Endothelial cell of umbilical vein (primary cell): ENCODE measurements at regions of chr22 and their contacts with region 1.

Region 1: DNA sequence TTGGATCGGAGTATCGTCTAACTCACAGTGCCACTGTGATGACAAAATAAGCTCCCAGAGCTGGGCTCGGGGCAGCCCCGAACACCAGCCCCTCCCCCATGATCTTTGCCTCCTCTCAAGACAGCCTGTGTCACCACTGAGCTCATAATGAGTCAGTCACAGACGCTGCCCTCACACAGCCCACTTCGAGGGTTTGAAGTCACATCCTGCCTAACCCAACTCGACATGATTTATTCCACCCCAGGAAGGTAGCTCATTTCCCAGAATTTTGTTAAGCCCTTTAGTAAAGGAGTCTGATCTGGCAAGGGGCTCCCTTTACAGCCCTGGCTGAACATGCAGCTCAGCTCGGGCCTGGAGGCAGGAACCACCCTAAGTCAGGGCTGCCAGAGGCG is 22.8 kb downstream of the MYH9 start:
- DNase-seq: peak; percentile 94
- H3K4me3 ChIP-seq: no peak overlapping the region
- H3K27ac ChIP-seq: peak overlapping the region; percentile 88
- H3K4me1 ChIP-seq: peaks cover 92% of the 10 kb centered on the region
- H3K27me3 ChIP-seq: no peaks in the 10 kb centered on the region
- CTCF ChIP-seq: no peak
- POLR2A ChIP-seq: peak; percentile 70

Region 2: GRCh38 chr22:36350751-36351594 is 14.0 kb before region 1 on chr22:
- CTCF ChIA-PET with region 1: interaction called, 12 read pairs
- POLR2A ChIA-PET with region 1: interaction called, 5 read pairs
- dilution Hi-C with region 1: no loop called
- intact Hi-C with region 1: loop called (anchors 1 kb)
- DNase-seq: peak; percentile 56
- H3K4me3 ChIP-seq: no peak overlapping the region
- H3K27ac ChIP-seq: peak overlapping the region; percentile 60
- H3K4me1 ChIP-seq: peaks cover 86% of the 10 kb centered on the region
- H3K27me3 ChIP-seq: no peaks in the 10 kb centered on the region
- CTCF ChIP-seq: no peak
- POLR2A ChIP-seq: no peak

Region 3: DNA sequence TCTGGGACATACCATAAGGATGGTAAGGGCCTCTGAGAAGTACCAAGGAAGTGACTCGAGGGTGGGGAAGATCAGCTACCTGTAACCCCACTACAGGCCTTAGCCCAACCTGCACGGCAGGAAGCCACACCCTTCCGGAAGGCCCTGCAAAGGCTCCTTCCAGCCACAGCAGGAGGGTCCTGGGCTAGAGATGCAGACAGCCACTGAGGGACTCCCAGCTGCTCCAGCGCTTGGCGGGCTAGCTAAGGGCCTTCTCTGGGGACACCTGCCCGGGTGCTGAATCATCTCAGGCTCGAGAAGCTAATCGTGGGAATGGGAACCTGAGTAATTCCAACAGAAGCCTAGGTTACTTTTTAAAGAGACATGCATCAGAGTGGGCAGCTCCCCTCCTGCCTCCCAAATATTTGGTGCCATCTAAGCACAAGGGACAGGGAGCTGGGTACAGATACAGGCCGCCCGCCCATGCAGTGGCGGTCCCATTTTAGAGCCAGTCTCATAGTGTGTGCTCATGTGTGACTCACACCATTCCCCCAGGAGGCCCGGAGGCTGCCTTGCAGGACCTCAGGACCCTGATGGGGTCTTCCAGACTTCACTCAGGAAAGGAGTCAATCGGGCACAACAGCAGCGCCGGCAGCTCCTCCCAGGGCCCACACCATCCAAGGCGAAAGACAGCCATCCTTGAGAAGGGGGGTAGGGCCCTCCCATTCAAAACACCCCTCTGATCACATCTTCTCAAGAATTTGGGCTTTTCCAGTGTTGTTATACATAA is 14.8 kb after region 1 on chr22:
- CTCF ChIA-PET with region 1: interaction called, 5 read pairs
- POLR2A ChIA-PET with region 1: interaction called, 10 read pairs
- dilution Hi-C with region 1: no loop called
- intact Hi-C with region 1: no loop called
- DNase-seq: no peak
- H3K4me3 ChIP-seq: no peak overlapping the region
- H3K27ac ChIP-seq: peak overlapping the region; percentile 4
- H3K4me1 ChIP-seq: peaks cover 83% of the 10 kb centered on the region
- H3K27me3 ChIP-seq: no peaks in the 10 kb centered on the region
- CTCF ChIP-seq: no peak
- POLR2A ChIP-seq: no peak

Region 4: DNA sequence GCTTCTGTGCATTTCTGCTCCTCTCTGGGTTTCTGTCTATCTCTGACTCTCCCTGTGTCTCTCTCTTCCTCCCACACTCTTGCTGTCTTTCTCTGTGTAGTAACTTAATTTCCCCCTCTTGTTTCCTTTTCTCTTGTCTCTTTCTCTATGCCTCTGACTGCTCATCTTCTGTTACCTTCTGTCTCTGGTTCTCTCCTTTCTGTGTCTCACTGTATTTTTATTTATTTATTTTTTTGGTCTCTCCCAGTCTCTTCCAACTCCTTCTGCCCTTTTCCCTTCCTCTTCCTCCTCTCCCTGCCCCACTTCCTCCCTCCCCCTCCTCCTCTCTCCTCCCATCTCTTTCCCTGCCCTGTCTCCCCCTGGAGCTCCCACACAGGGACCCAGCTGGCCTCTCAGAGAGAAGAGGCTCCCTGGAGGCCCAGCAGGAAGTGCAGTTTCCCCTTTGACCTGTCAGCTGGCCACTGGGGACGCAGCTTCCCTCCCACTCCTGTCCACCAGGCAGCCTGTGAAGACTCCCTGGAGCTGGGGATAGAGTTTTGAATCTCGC is 61.0 kb after region 1 on chr22:
- CTCF ChIA-PET with region 1: no interaction called
- POLR2A ChIA-PET with region 1: interaction called, 10 read pairs
- dilution Hi-C with region 1: no loop called
- intact Hi-C with region 1: no loop called
- DNase-seq: no peak
- H3K4me3 ChIP-seq: no peak overlapping the region
- H3K27ac ChIP-seq: no peak overlapping the region
- H3K4me1 ChIP-seq: peaks cover 19% of the 10 kb centered on the region
- H3K27me3 ChIP-seq: no peaks in the 10 kb centered on the region
- CTCF ChIP-seq: no peak
- POLR2A ChIP-seq: no peak

Region 5: GRCh38 chr22:36461669-36462649 is 96.9 kb after region 1 on chr22:
- CTCF ChIA-PET with region 1: no interaction called
- POLR2A ChIA-PET with region 1: interaction called, 6 read pairs
- dilution Hi-C with region 1: no loop called
- intact Hi-C with region 1: loop called (anchors 5 kb)
- DNase-seq: peak; percentile 67
- H3K4me3 ChIP-seq: no peak overlapping the region
- H3K27ac ChIP-seq: peak overlapping the region; percentile 59
- H3K4me1 ChIP-seq: peaks cover 49% of the 10 kb centered on the region
- H3K27me3 ChIP-seq: no peaks in the 10 kb centered on the region
- CTCF ChIP-seq: no peak
- POLR2A ChIP-seq: no peak